ENCODE measurements at regions of chr6 and their contacts with region 1.

Region 1: DNA sequence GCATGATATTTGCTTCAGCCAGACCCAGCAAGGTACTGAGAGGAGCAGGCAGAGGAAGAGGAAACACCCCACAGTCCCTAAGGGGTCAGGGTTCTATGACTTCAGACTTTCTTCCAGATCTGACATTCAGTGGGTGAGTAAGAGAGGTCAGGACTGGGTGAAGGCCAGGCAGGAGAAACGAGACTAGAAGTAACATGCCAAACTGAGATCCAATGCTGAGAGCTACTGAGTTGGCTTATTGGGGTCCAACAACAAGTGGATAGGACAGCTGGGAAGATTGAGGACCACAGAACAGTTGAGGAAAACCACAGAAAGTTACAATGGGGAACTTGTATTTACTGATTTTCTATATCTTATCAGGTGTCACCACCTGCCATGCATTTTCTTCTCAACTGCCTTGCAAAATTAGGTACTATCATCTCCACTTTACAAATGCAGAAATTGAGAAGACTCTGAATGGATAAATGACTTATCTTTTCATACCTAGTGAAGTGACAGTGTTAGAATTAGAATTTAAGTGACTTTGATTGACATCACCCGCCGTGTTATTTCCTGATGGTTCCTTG is 43.8 kb upstream of the HIVEP1 start:
- DNase-seq: no peak
- ATAC-seq: peak; percentile 99
- H3K4me3 Mint-ChIP-seq: no peak overlapping the region
- H3K27ac Mint-ChIP-seq: peak overlapping the region; percentile 9
- H3K4me1 Mint-ChIP-seq: peaks cover 20% of the 10 kb centered on the region
- H3K27me3 Mint-ChIP-seq: peaks cover 2% of the 10 kb centered on the region
- CTCF ChIP-seq: no peak

Region 2: GRCh38 chr6:11983306-11983705 is 15.0 kb after region 1 on chr6:
- CTCF ChIA-PET with region 1: no interaction called
- POLR2A ChIA-PET with region 1: no interaction called
- intact Hi-C with region 1: loop called (anchors 2 kb)
- DNase-seq: no peak
- ATAC-seq: no peak
- H3K4me3 Mint-ChIP-seq: no peak overlapping the region
- H3K27ac Mint-ChIP-seq: no peak overlapping the region
- H3K4me1 Mint-ChIP-seq: peaks cover 2% of the 10 kb centered on the region
- H3K27me3 Mint-ChIP-seq: peaks cover 3% of the 10 kb centered on the region
- CTCF ChIP-seq: no peak